GM10248 (cell line): ENCODE measurements at regions of chr16 and their contacts with region 1.

Region 1: DNA sequence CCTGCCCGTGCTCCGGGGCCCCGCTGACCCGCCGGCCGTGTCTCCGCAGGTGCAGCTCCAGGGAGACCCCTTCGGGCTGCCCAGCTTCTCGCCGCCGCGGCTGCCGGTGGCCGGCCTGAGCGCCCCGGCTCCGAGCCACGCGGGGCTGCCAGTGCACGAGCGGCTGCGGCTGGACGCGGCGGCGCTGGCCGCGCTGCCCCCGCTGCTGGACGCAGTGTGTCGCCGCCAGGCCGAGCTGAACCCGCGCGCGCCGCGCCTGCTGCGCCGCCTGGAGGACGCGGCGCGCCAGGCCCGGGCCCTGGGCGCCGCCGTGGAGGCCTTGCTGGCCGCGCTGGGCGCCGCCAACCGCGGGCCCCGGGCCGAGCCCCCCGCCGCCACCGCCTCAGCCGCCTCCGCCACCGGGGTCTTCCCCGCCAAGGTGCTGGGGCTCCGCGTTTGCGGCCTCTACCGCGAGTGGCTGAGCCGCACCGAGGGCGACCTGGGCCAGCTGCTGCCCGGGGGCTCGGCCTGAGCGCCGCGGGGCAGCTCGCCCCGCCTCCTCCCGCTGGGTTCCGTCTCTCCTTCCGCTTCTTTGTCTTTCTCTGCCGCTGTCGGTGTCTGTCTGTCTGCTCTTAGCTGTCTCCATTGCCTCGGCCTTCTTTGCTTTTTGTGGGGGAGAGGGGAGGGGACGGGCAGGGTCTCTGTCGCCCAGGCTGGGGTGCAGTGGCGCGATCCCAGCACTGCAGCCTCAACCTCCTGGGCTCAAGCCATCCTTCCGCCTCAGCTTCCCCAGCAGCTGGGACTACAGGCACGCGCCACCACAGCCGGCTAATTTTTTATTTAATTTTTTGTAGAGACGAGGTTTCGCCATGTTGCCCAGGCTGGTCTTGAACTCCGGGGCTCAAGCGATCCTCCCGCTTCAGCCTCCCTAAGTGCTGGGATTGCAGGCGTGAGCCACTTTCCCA is 5.9 kb downstream of the CTF1 start:
- DNase-seq: peak; percentile 85
- CTCF ChIP-seq: peak; percentile 85

Region 2: GRCh38 chr16:30813821-30814189 is 88.5 kb before region 1 on chr16:
- CTCF ChIA-PET with region 1: interaction called, 22 read pairs
- POLR2A ChIA-PET with region 1: interaction called, 5 read pairs
- DNase-seq: no peak
- CTCF ChIP-seq: no peak

Region 3: DNA sequence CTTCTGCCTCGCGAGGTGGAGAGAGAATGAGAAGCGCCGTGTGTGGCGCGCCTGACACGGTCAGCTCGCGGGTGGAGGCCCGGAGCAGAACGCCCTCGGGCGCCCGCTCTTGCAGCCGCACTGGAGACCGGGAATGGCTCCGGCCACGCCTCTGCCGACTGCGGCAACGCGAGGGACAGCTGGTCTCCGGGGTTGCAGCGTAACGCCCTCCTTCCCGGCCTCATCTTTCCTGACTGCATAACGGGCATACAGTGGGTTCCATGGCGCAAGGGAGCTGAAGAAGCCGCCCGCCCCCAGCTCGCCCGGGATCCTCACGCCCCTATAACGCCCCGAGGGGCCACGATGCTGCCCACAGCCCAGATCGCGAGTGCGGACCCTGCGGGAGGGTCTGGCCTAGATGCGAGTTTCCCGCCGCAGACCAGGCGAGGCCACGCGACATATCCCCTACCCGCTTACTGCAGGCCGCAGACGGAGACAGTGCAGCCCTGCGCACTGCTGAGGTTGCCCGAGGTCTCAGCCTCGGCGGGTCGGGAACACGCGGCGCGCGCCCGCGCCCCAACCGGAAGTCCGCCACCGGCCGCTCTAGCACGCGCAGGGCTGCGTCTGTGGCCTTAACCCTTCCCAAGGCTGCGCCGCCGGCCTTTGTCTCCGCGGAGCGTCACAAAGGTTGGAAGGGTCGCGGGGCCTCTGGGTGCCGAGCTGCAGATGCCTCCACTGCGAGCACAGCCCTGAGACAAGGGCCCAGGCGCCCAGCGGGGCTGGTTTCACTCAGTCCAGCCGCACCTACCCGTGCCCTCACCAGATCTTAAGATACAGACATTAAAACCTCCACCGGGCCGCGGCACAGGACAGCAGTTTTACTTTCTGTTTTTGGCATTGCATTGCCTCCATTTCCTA is 27.2 kb before region 1 on chr16:
- CTCF ChIA-PET with region 1: interaction called, 10 read pairs
- POLR2A ChIA-PET with region 1: no interaction called
- DNase-seq: peak; percentile 89
- CTCF ChIP-seq: peak; percentile 8

Region 4: DNA sequence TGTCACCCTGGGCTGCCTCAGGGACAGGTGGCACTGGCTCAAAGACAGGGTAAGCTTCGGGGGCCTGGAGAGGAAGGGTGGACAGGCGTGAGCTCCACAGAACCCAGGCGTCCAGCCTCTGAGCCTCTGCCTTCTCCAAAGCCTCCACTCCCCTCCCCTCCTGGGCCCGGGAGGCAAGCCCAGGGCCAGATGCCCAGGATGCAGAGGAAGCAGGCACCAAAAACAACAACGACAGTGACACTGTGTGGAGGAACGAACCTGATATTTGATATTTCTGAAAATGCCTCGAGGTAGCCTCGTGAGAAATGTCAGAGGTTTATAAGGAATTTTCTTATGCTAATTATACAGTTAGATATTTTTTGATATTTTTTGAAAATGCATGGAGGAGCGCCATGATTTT is 14.4 kb before region 1 on chr16:
- CTCF ChIA-PET with region 1: interaction called, 14 read pairs
- POLR2A ChIA-PET with region 1: no interaction called
- DNase-seq: no peak
- CTCF ChIP-seq: no peak

Region 5: GRCh38 chr16:30922420-30922959 is 20.2 kb after region 1 on chr16:
- CTCF ChIA-PET with region 1: interaction called, 13 read pairs
- POLR2A ChIA-PET with region 1: no interaction called
- DNase-seq: peak; percentile 94
- CTCF ChIP-seq: no peak

Region 6: DNA sequence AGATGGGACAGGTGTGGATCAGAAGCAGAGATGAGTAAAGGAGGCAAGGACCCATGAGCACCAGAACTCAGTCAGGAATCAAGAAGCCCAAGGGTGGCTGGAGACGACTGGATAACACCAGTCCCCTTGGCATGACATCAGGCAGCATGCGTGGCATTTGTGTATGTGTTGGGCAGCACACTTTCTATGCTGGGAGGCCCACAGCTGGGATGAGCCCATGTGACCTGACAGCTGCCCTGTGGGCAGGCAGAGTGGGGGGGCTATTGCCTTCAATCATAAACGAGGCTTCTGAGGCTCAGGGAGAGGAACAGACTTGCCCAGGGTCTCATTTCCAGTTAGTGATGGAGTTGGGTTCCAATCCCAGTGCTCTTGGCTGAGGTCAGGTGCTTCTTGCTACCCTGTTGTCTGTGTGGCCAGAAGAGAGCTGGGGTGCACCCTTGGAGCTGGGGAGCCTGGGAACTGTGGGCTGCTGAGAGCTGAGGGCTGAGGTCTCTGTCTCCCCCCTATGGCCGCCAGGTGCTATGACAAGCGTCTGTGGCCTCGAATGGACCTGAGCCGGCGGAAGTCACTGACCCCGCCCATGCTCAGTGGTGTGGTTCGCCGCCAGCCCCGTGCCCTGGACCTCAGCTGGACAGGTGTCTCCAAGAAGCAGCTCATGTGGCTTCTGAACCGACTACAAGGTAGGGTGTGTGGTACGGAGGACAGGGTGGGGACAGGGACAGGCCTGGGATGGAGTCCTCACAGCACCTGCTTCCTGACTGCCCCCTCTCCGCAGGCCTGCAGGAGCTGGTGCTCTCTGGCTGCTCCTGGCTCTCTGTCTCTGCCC is 39.5 kb after region 1 on chr16:
- CTCF ChIA-PET with region 1: interaction called, 27 read pairs
- POLR2A ChIA-PET with region 1: no interaction called
- DNase-seq: peak; percentile 93
- CTCF ChIP-seq: peak; percentile 95